ENCODE measurements at regions of chr11 and their contacts with region 1.

Region 1: GRCh38 chr11:27698872-27699474 is 1.3 kb downstream of the BDNF start:
- DNase-seq: peak; percentile 87
- H3K4me3 ChIP-seq: peak overlapping the region; percentile 91
- H3K27ac ChIP-seq: peak overlapping the region; percentile 89
- H3K27me3 ChIP-seq: no peaks in the 10 kb centered on the region
- CTCF ChIP-seq: peak; percentile 78

Region 2: GRCh38 chr11:27720277-27720830 is 21.4 kb after region 1 on chr11:
- CTCF ChIA-PET with region 1: interaction called, 54 read pairs
- POLR2A ChIA-PET with region 1: interaction called, 26 read pairs
- DNase-seq: no peak
- H3K4me3 ChIP-seq: peak overlapping the region; percentile 84
- H3K27ac ChIP-seq: no peak overlapping the region
- H3K27me3 ChIP-seq: no peaks in the 10 kb centered on the region
- CTCF ChIP-seq: peak; percentile 40

Region 3: DNA sequence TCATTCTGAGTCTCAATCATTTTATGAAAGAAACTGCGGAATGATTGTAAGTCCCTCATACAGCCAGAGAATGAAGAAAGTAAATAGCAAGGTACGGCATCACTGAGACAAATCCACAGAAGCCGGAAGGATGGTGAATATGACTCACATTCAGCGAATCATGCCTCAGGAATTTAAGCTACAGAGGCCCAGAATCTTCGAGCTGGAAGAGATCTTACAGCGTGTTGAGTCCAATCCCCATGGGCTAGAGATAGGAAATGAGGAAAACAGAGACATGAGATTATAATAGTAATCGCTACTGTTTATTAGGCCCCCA is 235.8 kb after region 1 on chr11:
- CTCF ChIA-PET with region 1: no interaction called
- POLR2A ChIA-PET with region 1: interaction called, 11 read pairs
- DNase-seq: peak; percentile 90
- H3K4me3 ChIP-seq: peak overlapping the region; percentile 11; the same call in 1 of the 2 replicates
- H3K27ac ChIP-seq: peak overlapping the region; percentile 100
- H3K27me3 ChIP-seq: no peaks in the 10 kb centered on the region
- CTCF ChIP-seq: no peak

Region 4: DNA sequence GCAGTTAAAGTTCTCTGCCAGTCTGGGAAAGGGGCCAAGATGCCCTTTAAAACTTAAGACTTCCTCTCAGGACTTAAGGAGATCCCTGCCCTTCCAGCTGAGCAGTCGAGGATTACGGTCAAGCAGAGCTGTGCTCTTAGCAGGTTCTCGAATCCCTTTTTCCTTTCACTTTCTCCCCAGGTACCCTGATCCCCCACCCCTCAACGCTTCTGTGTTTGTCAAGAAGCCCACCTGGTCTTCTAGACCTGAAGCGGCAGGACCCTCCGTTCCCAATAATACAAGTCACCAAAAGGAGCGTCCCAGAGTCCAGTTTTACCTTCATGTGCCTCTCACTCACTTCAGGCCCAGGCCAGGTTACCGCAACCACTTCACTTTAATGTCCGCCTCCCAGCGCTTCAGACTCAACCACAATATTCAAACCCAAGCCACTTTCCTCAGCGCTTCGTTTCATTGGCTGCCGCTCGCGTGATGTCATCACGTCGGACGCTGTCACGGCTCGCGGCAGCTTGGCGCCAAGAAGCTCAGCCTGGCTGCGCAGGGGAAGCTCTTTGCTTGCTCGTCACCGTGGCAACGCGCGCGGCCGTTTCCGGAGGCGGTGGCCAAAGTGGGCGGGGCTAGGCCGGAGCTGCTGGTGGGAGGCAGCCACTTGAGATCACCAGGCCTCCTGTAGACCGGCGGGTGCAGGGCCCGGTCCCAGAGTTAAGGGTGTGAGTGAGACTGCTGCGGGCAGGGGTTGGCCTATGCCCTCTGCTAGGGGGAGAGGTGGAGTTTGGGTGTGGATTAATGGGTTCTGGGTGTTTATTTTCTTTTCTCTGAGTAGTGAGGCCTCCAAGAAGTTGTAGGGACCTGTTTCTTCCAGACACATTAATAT is 409.0 kb after region 1 on chr11 and contains the starts of genes KIF18A and METTL15:
- CTCF ChIA-PET with region 1: interaction called, 11 read pairs
- POLR2A ChIA-PET with region 1: interaction called, 28 read pairs
- DNase-seq: peak; percentile 97
- H3K4me3 ChIP-seq: peak within 1 kb of the TSS; percentile 74
- H3K27ac ChIP-seq: peak within 1 kb of the TSS; percentile 83
- H3K27me3 ChIP-seq: no peaks in the 10 kb centered on the region
- CTCF ChIP-seq: no peak
- polyA plus RNA-seq, gene KIF18A: 5.4 and 8.9 TPM in 2 replicates
- polyA plus RNA-seq, gene METTL15: 11.1 and 15.2 TPM in 2 replicates

Region 5: GRCh38 chr11:28343276-28344233 is 644.6 kb after region 1 on chr11:
- CTCF ChIA-PET with region 1: interaction called, 15 read pairs
- POLR2A ChIA-PET with region 1: no interaction called
- DNase-seq: peak; percentile 76
- H3K4me3 ChIP-seq: no peak overlapping the region
- H3K27ac ChIP-seq: no peak overlapping the region
- H3K27me3 ChIP-seq: no peaks in the 10 kb centered on the region
- CTCF ChIP-seq: no peak

Region 6: GRCh38 chr11:29333993-29334775 is 1635.2 kb after region 1 on chr11:
- CTCF ChIA-PET with region 1: interaction called, 11 read pairs
- POLR2A ChIA-PET with region 1: interaction called, 4 read pairs
- DNase-seq: peak; percentile 71
- H3K4me3 ChIP-seq: no peak overlapping the region
- H3K27ac ChIP-seq: peak overlapping the region; percentile 33
- H3K27me3 ChIP-seq: no peaks in the 10 kb centered on the region
- CTCF ChIP-seq: peak; percentile 58

Measured in AG04450 (cell line).